ENCODE measurements at regions of chr2 and their contacts with region 1.

Region 1: GRCh38 chr2:6896930-6897759 is 19.6 kb downstream of the RSAD2 start:
- DNase-seq: peak in 4 of 5 donors; percentile 39 to 51 (median 46)
- H3K4me3 ChIP-seq: no peak overlapping the region
- H3K4me3 Mint-ChIP-seq: no peak overlapping the region
- H3K27ac ChIP-seq: no peak overlapping the region
- H3K27ac Mint-ChIP-seq: peak overlapping the region in 1 of 7 donors; percentile 16
- H3K4me1 ChIP-seq: no peaks in the 10 kb centered on the region
- H3K4me1 Mint-ChIP-seq: peaks cover 0 to 10% (median 0%) of the 10 kb centered on the region in 4 donors
- H3K27me3 ChIP-seq: no peaks in the 10 kb centered on the region
- H3K27me3 Mint-ChIP-seq: no peaks in the 10 kb centered on the region

Region 2: DNA sequence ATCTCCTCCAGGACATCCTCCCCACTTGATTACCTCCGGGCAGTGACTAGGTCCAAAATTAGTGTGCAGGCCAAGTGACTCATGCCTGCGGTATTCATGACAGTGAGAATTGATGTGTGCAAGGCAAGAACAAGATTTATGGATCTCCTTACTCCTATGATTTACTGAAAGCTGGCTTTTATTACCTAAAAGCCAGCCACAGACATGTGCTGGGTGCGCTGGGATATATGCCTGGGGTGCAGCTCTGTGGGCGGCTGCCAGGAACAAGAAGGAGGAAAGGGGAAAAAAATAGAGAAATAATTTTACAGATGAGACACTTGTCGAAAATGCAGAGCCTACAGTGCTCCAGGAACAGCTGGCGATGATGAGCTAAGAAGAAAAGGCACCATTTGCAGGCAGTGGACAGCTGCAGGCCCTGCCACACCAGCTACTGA is 390.8 kb before region 1 on chr2:
- CTCF ChIA-PET with region 1: no interaction called
- POLR2A ChIA-PET with region 1: no interaction called
- intact Hi-C with region 1: no loop called
- DNase-seq: no peak
- H3K4me3 ChIP-seq: no peak overlapping the region
- H3K4me3 Mint-ChIP-seq: no peak overlapping the region
- H3K27ac ChIP-seq: no peak overlapping the region
- H3K27ac Mint-ChIP-seq: no peak overlapping the region
- H3K4me1 ChIP-seq: no peaks in the 10 kb centered on the region
- H3K4me1 Mint-ChIP-seq: no peaks in the 10 kb centered on the region
- H3K27me3 ChIP-seq: no peaks in the 10 kb centered on the region
- H3K27me3 Mint-ChIP-seq: no peaks in the 10 kb centered on the region

Region 3: GRCh38 chr2:6723865-6724604 is 173.1 kb before region 1 on chr2:
- CTCF ChIA-PET with region 1: no interaction called
- POLR2A ChIA-PET with region 1: no interaction called
- intact Hi-C with region 1: no loop called
- DNase-seq: no peak
- H3K4me3 ChIP-seq: no peak overlapping the region
- H3K4me3 Mint-ChIP-seq: no peak overlapping the region
- H3K27ac ChIP-seq: no peak overlapping the region
- H3K27ac Mint-ChIP-seq: no peak overlapping the region
- H3K4me1 ChIP-seq: no peaks in the 10 kb centered on the region
- H3K4me1 Mint-ChIP-seq: no peaks in the 10 kb centered on the region
- H3K27me3 ChIP-seq: no peaks in the 10 kb centered on the region
- H3K27me3 Mint-ChIP-seq: peaks cover 4% of the 10 kb centered on the region in 2 donors

Region 4: GRCh38 chr2:6826081-6826913 is 70.8 kb before region 1 on chr2:
- CTCF ChIA-PET with region 1: interaction called, 3 read pairs
- POLR2A ChIA-PET with region 1: no interaction called
- intact Hi-C with region 1: loop called (anchors 2 kb)
- DNase-seq: peak; percentile 40 to 50 (median 46)
- H3K4me3 ChIP-seq: no peak overlapping the region
- H3K4me3 Mint-ChIP-seq: no peak overlapping the region
- H3K27ac ChIP-seq: no peak overlapping the region
- H3K27ac Mint-ChIP-seq: no peak overlapping the region
- H3K4me1 ChIP-seq: no peaks in the 10 kb centered on the region
- H3K4me1 Mint-ChIP-seq: peaks cover 8 to 12% (median 9%) of the 10 kb centered on the region in 4 donors
- H3K27me3 ChIP-seq: no peaks in the 10 kb centered on the region
- H3K27me3 Mint-ChIP-seq: no peaks in the 10 kb centered on the region

Region 5: GRCh38 chr2:6909431-6910385 is 12.6 kb after region 1 on chr2:
- CTCF ChIA-PET with region 1: interaction called, 183 read pairs
- POLR2A ChIA-PET with region 1: interaction called, 10 read pairs
- intact Hi-C with region 1: loop called (anchors 1 kb)
- DNase-seq: peak; percentile 73 to 81 (median 75)
- H3K4me3 ChIP-seq: peak overlapping the region in 1 of 2 donors; percentile 40
- H3K4me3 Mint-ChIP-seq: peak overlapping the region; percentile 63 to 88 (median 78)
- H3K27ac ChIP-seq: peak overlapping the region; percentile 4
- H3K27ac Mint-ChIP-seq: peak overlapping the region; percentile 76 to 98 (median 93)
- H3K4me1 ChIP-seq: peaks cover 86% of the 10 kb centered on the region
- H3K4me1 Mint-ChIP-seq: peaks cover 72 to 91% (median 78%) of the 10 kb centered on the region in 4 donors
- H3K27me3 ChIP-seq: no peaks in the 10 kb centered on the region
- H3K27me3 Mint-ChIP-seq: no peaks in the 10 kb centered on the region

Region 6: GRCh38 chr2:6934758-6935651 is 37.9 kb after region 1 on chr2:
- CTCF ChIA-PET with region 1: interaction called, 7 read pairs
- POLR2A ChIA-PET with region 1: no interaction called
- intact Hi-C with region 1: loop called (anchors 5 kb)
- DNase-seq: no peak
- H3K4me3 ChIP-seq: no peak overlapping the region
- H3K4me3 Mint-ChIP-seq: peak overlapping the region in 5 of 8 donors; percentile 3 to 31 (median 9)
- H3K27ac ChIP-seq: no peak overlapping the region
- H3K27ac Mint-ChIP-seq: peak overlapping the region in 2 of 7 donors; percentile 17 to 37
- H3K4me1 ChIP-seq: peaks cover 30% of the 10 kb centered on the region
- H3K4me1 Mint-ChIP-seq: peaks cover 36 to 77% (median 51%) of the 10 kb centered on the region in 4 donors
- H3K27me3 ChIP-seq: no peaks in the 10 kb centered on the region
- H3K27me3 Mint-ChIP-seq: no peaks in the 10 kb centered on the region

Region 7: GRCh38 chr2:7014174-7014640 is 117.1 kb after region 1 on chr2:
- CTCF ChIA-PET with region 1: interaction called, 60 read pairs
- POLR2A ChIA-PET with region 1: interaction called, 6 read pairs
- intact Hi-C with region 1: loop called (anchors 1 kb)
- DNase-seq: peak in 4 of 5 donors; percentile 33 to 57 (median 40)
- H3K4me3 ChIP-seq: no peak overlapping the region
- H3K4me3 Mint-ChIP-seq: peak overlapping the region in 1 of 8 donors; percentile 15
- H3K27ac ChIP-seq: no peak overlapping the region
- H3K27ac Mint-ChIP-seq: peak overlapping the region in 5 of 7 donors; percentile 36 to 61 (median 49)
- H3K4me1 ChIP-seq: peaks cover 15% of the 10 kb centered on the region
- H3K4me1 Mint-ChIP-seq: peaks cover 25 to 35% (median 26%) of the 10 kb centered on the region in 4 donors
- H3K27me3 ChIP-seq: no peaks in the 10 kb centered on the region
- H3K27me3 Mint-ChIP-seq: no peaks in the 10 kb centered on the region

Region 8: DNA sequence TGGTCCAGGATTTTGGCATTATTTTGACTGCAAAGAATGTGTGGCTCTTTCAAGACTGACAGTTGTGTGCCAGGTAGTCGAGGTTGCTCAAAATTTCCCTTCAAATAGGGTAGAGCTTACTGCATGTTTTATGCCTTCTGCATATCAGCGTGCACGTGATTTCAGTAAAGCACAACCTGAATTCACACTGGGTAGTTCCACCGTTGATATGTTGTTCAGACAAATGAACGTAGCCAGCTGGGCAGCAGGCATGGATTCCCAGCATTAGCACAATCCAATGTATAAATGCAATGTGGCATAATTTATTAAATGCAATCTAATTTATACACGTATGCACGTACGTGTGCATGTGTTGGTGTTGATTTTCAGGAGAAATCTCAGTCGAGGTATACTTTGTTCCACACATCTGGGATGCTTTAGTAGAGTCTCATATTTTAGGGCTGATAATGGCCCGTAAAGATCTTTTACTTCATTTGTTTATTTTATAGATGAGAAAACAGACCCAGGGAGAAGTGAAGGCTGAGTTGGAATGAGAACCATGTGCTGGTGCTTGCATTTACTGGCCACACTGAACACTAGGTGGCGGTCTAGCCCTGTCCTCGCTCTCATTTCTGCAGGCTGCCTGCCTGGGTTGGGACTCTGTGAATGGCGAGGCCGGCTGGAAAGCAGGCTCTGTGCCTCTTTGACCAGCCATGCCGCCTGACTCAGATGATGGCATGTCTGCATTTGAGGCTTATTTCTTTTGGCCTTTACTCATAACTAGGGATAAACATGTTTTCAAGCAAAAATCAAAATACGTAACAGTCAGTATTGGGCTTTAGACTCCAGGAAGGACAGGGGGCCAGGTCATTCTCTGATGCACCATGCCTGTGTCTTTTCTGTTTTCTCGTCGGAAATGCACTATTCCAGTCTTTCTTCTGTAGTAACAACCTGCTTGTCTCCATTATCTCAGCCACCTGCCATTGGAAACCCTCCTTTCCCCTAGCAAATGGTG is 140.5 kb after region 1 on chr2:
- CTCF ChIA-PET with region 1: interaction called, 188 read pairs
- POLR2A ChIA-PET with region 1: no interaction called
- intact Hi-C with region 1: no loop called
- DNase-seq: peak in 4 of 5 donors; percentile 42 to 61 (median 51)
- H3K4me3 ChIP-seq: no peak overlapping the region
- H3K4me3 Mint-ChIP-seq: no peak overlapping the region
- H3K27ac ChIP-seq: no peak overlapping the region
- H3K27ac Mint-ChIP-seq: no peak overlapping the region
- H3K4me1 ChIP-seq: no peaks in the 10 kb centered on the region
- H3K4me1 Mint-ChIP-seq: peaks cover under 1 to 12% (median 5%) of the 10 kb centered on the region in 4 donors
- H3K27me3 ChIP-seq: no peaks in the 10 kb centered on the region
- H3K27me3 Mint-ChIP-seq: no peaks in the 10 kb centered on the region